ENCODE measurements at regions of chr14 and their contacts with region 1.

Region 1: DNA sequence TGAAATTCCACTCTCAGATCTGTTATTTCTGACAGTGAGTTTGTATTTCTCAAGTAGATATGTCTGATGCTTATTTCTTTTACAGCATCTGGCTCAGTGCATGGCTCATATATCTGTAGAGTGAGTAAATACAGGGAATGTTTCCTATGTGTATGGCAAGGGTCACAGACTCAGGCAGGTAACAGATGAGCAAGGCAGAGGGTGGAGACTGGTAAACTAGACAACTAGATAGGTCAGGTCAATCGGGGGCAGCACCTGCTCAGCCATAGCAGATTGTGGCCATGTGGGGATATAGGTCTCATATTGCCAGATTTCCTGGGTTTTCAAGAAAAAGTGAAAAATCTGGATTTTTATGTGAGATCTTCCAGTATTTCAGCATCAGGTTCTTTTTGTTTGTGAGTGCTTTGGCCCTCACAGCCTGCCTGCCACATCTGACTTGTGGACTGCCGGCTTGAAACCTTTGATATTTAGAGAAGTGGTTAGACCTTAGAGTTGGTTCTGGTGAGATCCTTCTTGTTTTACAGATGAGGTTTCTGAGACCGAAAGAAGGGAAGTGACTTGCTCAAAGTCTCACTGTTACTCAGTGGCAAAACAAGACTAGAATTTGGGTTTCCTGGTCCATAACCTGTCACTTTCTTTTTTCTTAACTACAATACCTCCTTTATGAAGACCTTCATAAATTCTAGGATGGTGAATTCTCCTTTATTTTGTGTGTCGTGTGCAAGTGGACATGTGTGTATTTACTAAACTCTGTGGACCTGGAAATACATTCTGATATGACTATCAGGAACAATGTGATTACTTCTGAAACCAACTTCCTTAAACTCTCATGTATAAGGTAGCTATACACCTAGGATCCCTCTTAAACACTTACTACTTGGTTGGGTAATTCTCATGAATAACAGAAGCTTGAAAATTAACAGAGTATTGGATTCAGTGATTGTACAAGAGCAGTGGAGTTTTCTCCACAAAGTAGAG is 34.4 kb downstream of the PROX2 start:
- DNase-seq: peak in 2 of 3 donors; percentile 79 to 86
- H3K4me3 ChIP-seq: no peak overlapping the region
- H3K27ac ChIP-seq: no peak overlapping the region
- H3K4me1 ChIP-seq: peaks cover 8 to 33% (median 19%) of the 10 kb centered on the region in 4 experiments
- H3K27me3 ChIP-seq: no peaks in the 10 kb centered on the region

Region 2: DNA sequence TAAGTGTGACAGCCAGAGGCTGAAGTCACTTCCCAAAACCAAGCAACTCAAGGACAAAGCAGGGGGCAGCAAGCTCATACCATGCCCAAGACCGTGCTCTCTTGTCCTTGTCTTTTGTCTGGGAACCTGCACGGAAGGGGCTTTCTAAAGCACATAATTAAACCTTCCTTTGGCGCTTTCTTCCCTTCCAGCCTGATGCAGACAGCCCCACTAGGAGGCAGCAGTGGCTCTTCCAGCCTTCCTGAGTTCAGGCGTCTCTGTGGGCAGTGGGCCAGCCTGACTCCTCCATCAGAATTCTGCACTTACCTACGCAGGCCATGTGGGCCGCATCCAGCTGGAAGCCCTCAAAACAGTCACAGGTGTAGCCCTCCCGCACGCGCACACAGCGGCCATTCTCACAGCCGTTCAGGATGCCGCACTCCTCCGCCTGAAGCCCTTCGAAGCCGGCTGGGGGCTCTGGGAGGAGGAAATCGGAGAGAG is 340.3 kb before region 1 on chr14:
- CTCF ChIA-PET with region 1: no interaction called
- POLR2A ChIA-PET with region 1: no interaction called
- DNase-seq: peak in 1 of 3 donors; percentile 27
- H3K4me3 ChIP-seq: no peak overlapping the region
- H3K27ac ChIP-seq: no peak overlapping the region
- H3K4me1 ChIP-seq: peaks cover 0 to 2% (median 1%) of the 10 kb centered on the region in 4 experiments
- H3K27me3 ChIP-seq: no peaks in the 10 kb centered on the region

Region 3: GRCh38 chr14:74852927-74853514 is 11.5 kb after region 1 on chr14:
- CTCF ChIA-PET with region 1: interaction called, 24 read pairs
- POLR2A ChIA-PET with region 1: no interaction called
- DNase-seq: no peak
- H3K4me3 ChIP-seq: no peak overlapping the region
- H3K27ac ChIP-seq: no peak overlapping the region
- H3K4me1 ChIP-seq: peaks cover 0 to 9% (median 2%) of the 10 kb centered on the region in 4 experiments
- H3K27me3 ChIP-seq: no peaks in the 10 kb centered on the region

Measured in common myeloid progenitor, CD34-positive (primary cell).